H1 (cell line): ENCODE measurements at regions of chr14 and their contacts with region 1.

Region 1: GRCh38 chr14:36604757-36605505 is 22.5 kb upstream of the NKX2-8 start:
- DNase-seq: peak in 1 of 2 experiments; percentile 70
- H3K4me3 ChIP-seq: peak overlapping the region in 1 of 4 experiments; percentile 40; a peak in 2 of 8 replicates
- H3K27ac ChIP-seq: no peak overlapping the region
- H3K4me1 ChIP-seq: peaks cover 2 to 12% (median 8%) of the 10 kb centered on the region in 4 experiments; a peak in 5 of 7 replicates
- H3K27me3 ChIP-seq: no peaks in the 10 kb centered on the region
- CTCF ChIP-seq: peak in 2 of 3 experiments; percentile 78 to 88; a peak in 3 of 4 replicates
- EP300 ChIP-seq: no peak
- POLR2A ChIP-seq: no peak
- RAD21 ChIP-seq: peak; percentile 90 to 93

Region 2: DNA sequence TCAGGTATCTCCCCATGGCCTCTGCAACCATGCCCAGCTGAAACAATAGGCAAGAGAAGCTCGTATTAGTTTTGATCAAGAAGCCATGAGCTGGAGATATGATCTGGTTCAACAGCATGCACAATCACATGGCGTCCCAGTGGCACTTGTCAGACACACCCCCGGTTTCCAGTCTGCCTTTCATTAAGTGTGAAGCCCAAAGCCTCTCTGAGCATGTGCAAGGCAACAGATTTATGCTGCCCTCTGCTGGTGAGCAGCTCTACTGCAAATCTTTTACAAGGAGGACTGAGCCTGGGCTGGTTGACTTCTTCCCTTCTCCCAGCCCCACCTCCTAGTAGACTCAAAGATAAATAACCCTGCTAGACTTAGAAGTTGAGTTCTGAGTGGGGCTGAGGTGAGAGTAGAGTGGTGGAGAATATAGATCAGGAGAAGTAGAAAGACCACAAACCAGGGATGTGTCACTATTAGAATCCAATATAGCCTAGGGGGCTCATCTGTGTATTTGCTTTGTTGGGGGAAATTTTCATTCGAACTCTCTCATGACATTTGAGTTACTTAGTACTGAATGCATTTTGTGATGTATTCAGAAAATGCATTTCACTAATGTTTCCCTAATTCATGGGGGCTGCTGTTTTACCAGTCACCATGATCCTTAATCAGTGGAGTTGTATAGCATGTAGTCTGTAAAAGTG is 230.8 kb before region 1 on chr14:
- CTCF ChIA-PET with region 1: interaction called, 10 read pairs
- POLR2A ChIA-PET with region 1: no interaction called
- DNase-seq: peak; percentile 57 to 92
- H3K4me3 ChIP-seq: no peak overlapping the region
- H3K27ac ChIP-seq: no peak overlapping the region
- H3K4me1 ChIP-seq: no peaks in the 10 kb centered on the region
- H3K27me3 ChIP-seq: no peaks in the 10 kb centered on the region; a peak in 1 of 7 replicates
- CTCF ChIP-seq: peak; percentile 54 to 98 (median 88)
- EP300 ChIP-seq: no peak
- POLR2A ChIP-seq: no peak
- RAD21 ChIP-seq: peak; percentile 89 to 92

Region 3: DNA sequence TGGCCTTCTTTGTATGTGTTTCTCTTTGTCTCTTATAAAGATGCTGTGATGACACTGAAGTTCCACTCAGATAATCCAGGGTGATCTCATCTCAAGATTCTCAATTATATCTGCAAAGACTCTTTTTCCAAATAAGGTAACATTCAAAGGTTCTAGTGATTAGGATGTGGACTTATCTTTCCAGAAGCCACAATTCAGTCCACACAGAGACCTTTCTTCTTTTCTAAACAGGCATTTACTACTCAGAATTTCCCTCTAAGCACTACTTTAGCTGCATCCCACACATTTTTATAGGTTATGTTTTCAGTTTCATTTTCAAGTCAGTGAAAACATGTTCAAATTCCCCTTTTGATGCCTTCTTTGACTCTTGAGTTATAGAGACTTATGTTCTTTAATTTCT is 75.9 kb before region 1 on chr14:
- CTCF ChIA-PET with region 1: interaction called, 395 read pairs
- POLR2A ChIA-PET with region 1: interaction called, 3 read pairs
- DNase-seq: no peak
- H3K4me3 ChIP-seq: no peak overlapping the region
- H3K27ac ChIP-seq: no peak overlapping the region
- H3K4me1 ChIP-seq: peaks cover 0 to 6% (median 0%) of the 10 kb centered on the region in 4 experiments; a peak in 4 of 7 replicates
- H3K27me3 ChIP-seq: peaks cover 29 to 58% (median 51%) of the 10 kb centered on the region in 4 experiments
- CTCF ChIP-seq: no peak
- EP300 ChIP-seq: no peak
- POLR2A ChIP-seq: no peak
- RAD21 ChIP-seq: no peak

Region 4: GRCh38 chr14:36580856-36581831 is 23.8 kb before region 1 on chr14:
- CTCF ChIA-PET with region 1: interaction called, 36 read pairs
- POLR2A ChIA-PET with region 1: no interaction called
- DNase-seq: peak in 1 of 2 experiments; percentile 74
- H3K4me3 ChIP-seq: peak overlapping the region in 3 of 4 experiments; percentile 19 to 58 (median 26); a peak in 7 of 8 replicates
- H3K27ac ChIP-seq: no peak overlapping the region
- H3K4me1 ChIP-seq: peaks cover 0 to 21% (median 11%) of the 10 kb centered on the region in 4 experiments; a peak in 5 of 7 replicates
- H3K27me3 ChIP-seq: peaks cover 95 to 100% (median 97%) of the 10 kb centered on the region in 4 experiments
- CTCF ChIP-seq: 0 out of 4 replicates have a peak, but pooled peaks of 1 of the 3 experiments have one; percentile 2
- EP300 ChIP-seq: no peak
- POLR2A ChIP-seq: no peak
- RAD21 ChIP-seq: no peak

Region 5: DNA sequence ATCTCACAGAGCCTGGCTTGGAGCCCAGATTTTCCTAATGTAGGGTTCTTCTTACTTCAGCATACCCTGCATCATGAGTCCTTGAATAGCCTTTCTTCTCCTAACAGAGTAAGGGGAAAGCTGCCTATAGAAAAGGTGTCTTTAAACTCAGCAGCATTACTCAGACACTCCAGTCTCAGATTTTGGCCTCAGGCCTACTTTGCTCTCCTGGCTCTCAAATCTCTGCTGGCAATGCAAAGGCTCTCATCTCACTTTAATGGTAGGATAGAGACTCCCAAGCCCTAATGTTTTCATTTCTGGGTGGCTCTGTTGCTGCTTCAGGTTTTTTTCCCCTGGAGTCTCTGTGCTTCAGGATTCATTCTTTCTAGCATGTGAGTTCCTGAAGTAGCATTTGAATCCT is 13.4 kb before region 1 on chr14:
- CTCF ChIA-PET with region 1: interaction called, 60 read pairs
- POLR2A ChIA-PET with region 1: no interaction called
- DNase-seq: no peak
- H3K4me3 ChIP-seq: no peak overlapping the region
- H3K27ac ChIP-seq: no peak overlapping the region
- H3K4me1 ChIP-seq: peaks cover 0 to 5% (median 0%) of the 10 kb centered on the region in 4 experiments; a peak in 2 of 7 replicates
- H3K27me3 ChIP-seq: peaks cover 31 to 73% (median 58%) of the 10 kb centered on the region in 4 experiments
- CTCF ChIP-seq: no peak
- EP300 ChIP-seq: no peak
- POLR2A ChIP-seq: no peak
- RAD21 ChIP-seq: no peak

Region 6: GRCh38 chr14:36626151-36626550 is 21.2 kb after region 1 on chr14:
- CTCF ChIA-PET with region 1: interaction called, 25 read pairs
- POLR2A ChIA-PET with region 1: no interaction called
- DNase-seq: no peak
- H3K4me3 ChIP-seq: no peak overlapping the region
- H3K27ac ChIP-seq: no peak overlapping the region
- H3K4me1 ChIP-seq: peaks cover 0 to 5% (median 0%) of the 10 kb centered on the region in 4 experiments; a peak in 1 of 7 replicates
- H3K27me3 ChIP-seq: no peaks in the 10 kb centered on the region
- CTCF ChIP-seq: no peak
- EP300 ChIP-seq: no peak
- POLR2A ChIP-seq: no peak
- RAD21 ChIP-seq: no peak

Region 7: DNA sequence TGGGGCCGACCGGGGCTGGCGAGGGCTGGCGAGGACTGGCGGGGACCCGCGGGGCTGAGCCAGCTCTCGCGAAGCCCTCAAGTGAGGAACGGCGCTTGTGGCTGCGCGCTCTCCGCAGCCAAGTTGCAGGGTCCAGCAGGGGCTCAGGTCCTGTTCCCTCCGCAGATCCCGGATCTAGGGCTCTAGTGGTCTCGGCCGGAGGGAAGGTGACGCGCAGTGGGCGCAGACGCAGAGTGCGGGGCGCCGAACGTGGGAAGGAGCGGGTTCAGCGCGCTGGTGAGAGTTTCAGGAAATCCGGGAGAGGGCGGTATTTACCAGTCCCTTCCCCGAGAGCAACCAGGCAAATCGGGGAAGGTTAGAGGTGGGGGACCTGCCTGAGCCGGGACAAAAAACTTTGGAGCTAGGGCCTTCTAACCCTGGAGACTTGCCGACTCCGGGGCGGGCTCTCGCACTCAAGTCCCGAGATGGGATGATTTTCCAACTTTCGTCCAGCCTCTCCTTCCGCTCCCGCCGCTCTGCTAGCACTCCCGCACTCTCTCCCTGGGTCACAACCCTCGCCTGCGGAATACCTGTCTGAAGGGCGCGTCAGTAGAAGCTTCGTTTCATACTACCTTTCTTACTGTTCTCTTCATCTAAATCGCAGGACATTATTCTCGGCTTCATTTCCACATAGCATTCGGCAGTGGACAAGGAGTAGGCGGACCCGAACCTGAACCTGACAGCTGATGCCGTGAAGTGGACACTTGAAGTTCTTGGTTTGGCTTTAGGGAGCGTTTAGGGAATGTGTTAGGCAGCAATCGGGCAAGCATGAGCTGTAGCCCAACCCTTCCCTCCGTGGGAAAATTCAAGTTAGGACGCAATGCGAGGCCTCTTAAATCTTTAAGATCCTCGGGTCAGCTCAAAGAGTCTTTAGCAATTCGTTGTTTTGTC is 43.2 kb after region 1 on chr14:
- CTCF ChIA-PET with region 1: interaction called, 10 read pairs
- POLR2A ChIA-PET with region 1: no interaction called
- DNase-seq: peak in 1 of 2 experiments; percentile 80
- H3K4me3 ChIP-seq: peak overlapping the region; percentile 19 to 64 (median 57); a peak in 7 of 8 replicates
- H3K27ac ChIP-seq: no peak overlapping the region
- H3K4me1 ChIP-seq: peaks cover 0 to 15% (median 7%) of the 10 kb centered on the region in 4 experiments; a peak in 6 of 7 replicates
- H3K27me3 ChIP-seq: peaks cover 73 to 85% (median 82%) of the 10 kb centered on the region in 4 experiments
- CTCF ChIP-seq: peak; percentile 63 to 67 (median 64)
- EP300 ChIP-seq: no peak
- POLR2A ChIP-seq: no peak
- RAD21 ChIP-seq: peak; percentile 75 to 77

Region 8: DNA sequence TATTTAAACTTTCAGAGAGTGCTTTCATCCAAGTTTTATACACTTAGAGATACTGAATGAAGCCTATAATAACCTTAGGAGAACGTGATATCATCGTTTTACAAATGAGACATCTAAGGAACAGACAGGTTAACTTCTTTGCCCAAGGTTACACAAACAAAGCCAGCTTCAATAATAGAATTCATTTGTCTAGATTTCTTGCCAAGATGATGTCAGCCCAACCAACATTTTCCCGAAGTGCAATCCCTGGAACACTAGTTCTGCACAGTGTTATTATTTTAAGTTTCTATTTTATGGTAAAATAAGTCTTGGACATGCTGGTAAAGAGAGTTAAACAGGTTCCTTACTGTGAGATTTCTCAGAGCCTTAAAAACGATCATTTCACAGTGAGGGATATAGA is 392.9 kb after region 1 on chr14:
- CTCF ChIA-PET with region 1: no interaction called
- POLR2A ChIA-PET with region 1: no interaction called
- DNase-seq: no peak
- H3K4me3 ChIP-seq: no peak overlapping the region
- H3K27ac ChIP-seq: no peak overlapping the region
- H3K4me1 ChIP-seq: no peaks in the 10 kb centered on the region; a peak in 1 of 7 replicates
- H3K27me3 ChIP-seq: no peaks in the 10 kb centered on the region
- CTCF ChIP-seq: no peak
- EP300 ChIP-seq: no peak
- POLR2A ChIP-seq: no peak
- RAD21 ChIP-seq: no peak